Pancreas (tissue), 10 donors: ENCODE measurements at regions of chr1 and their contacts with region 1.

Region 1: DNA sequence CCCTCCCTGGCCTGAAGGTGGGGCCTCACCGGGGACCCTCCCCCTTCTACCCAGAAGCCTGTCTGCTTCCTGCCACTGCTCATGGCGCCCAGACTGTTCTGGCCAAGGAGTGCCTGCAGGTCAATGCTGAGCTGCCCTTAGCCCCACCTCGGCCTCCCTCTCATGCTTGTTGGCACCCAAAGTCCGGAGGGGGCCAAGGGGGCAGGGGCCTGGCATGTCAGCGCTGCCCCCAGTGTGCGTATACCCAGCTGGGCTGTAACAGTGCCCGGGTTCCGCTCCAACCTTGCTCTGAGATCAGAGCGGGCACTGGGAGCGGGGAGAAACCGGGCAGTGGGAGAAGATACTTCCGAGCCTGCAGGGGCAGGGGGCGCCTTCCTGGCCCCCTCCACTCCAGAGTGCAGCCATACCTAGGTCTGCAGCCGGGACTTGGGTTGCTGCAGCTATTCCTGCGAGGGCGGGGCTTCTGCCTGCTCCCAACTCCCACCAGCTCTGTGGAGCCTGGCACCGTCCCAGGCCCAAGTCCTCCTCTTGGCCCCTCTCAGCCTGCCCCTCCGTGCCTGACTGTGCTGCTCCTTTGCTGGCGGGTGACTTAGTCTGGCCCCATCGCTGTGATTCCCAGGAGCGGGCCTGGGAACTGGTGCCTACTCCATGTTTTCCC is 21.4 kb upstream of the TGFB2 start:
- DNase-seq: peak in 2 of 6 donors; percentile 56 to 71
- ATAC-seq: no peak
- H3K4me3 ChIP-seq: no peak overlapping the region
- H3K27ac ChIP-seq: no peak overlapping the region
- H3K4me1 ChIP-seq: no peaks in the 10 kb centered on the region
- H3K27me3 ChIP-seq: no peaks in the 10 kb centered on the region
- CTCF ChIP-seq: no peak

Region 2: GRCh38 chr1:219566951-219567947 is 1243.6 kb after region 1 on chr1:
- intact Hi-C with region 1: loop called in 1 of 3 experiments (anchors 10 kb)
- DNase-seq: peak in 1 of 6 donors; percentile 15
- ATAC-seq: peak in 3 of 4 donors; percentile 85 to 92 (median 89)
- H3K4me3 ChIP-seq: no peak overlapping the region
- H3K27ac ChIP-seq: no peak overlapping the region
- H3K4me1 ChIP-seq: no peaks in the 10 kb centered on the region
- H3K27me3 ChIP-seq: no peaks in the 10 kb centered on the region
- CTCF ChIP-seq: peak in 3 of 4 donors; percentile 31 to 47 (median 47)

Region 3: GRCh38 chr1:219660666-219661463 is 1337.2 kb after region 1 on chr1:
- intact Hi-C with region 1: loop called in 1 of 3 experiments (anchors 10 kb)
- DNase-seq: peak; percentile 76 to 94 (median 87)
- ATAC-seq: peak; percentile 91 to 99 (median 97)
- H3K4me3 ChIP-seq: no peak overlapping the region
- H3K27ac ChIP-seq: no peak overlapping the region
- H3K4me1 ChIP-seq: no peaks in the 10 kb centered on the region
- H3K27me3 ChIP-seq: peaks cover 0 to 4% (median 0%) of the 10 kb centered on the region in 4 donors
- CTCF ChIP-seq: peak; percentile 43 to 64 (median 58)